T-cell (primary cell): ENCODE measurements at regions of chrX and their contacts with region 1.

Region 1: GRCh38 chrX:152941328-152942106 is 43.6 kb downstream of the ZNF185 start:
- DNase-seq: peak; percentile 79 to 93 (median 86)
- ATAC-seq: peak; percentile 90 to 97 (median 96)
- H3K4me3 ChIP-seq: peak overlapping the region; percentile 38 to 54
- H3K4me3 Mint-ChIP-seq: peak overlapping the region; percentile 78 to 86 (median 79)
- H3K27ac ChIP-seq: peak overlapping the region; percentile 81
- H3K27ac Mint-ChIP-seq: peak overlapping the region; percentile 88 to 91
- H3K4me1 ChIP-seq: peaks cover 0 to 11% of the 10 kb centered on the region in 2 experiments
- H3K4me1 Mint-ChIP-seq: peaks cover 0 to 10% (median 10%) of the 10 kb centered on the region in 3 donors
- H3K27me3 ChIP-seq: no peaks in the 10 kb centered on the region
- H3K27me3 Mint-ChIP-seq: peaks cover 0 to 26% of the 10 kb centered on the region in 2 donors

Region 2: DNA sequence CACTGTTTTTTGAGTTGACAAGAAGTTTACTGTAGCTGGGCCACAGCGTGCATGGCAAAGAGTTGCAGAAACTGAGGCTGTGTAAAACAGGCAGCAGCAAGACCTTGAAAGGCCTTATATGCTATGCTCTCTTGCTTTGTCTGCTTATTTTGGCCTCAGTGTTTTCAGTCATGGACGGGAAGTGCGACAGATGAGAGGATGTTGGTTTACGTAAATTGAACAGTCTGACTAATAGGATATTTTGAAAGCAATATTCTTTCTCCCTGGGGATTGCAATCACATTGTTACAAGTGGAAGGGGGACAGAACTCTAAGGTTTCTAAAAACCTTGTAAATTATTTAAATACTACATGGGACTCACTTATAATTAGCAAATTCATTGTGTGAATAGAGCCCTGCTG is 770.9 kb before region 1 on chrX:
- CTCF ChIA-PET with region 1: no interaction called
- POLR2A ChIA-PET with region 1: no interaction called
- DNase-seq: no peak
- ATAC-seq: no peak
- H3K4me3 ChIP-seq: no peak overlapping the region
- H3K4me3 Mint-ChIP-seq: no peak overlapping the region
- H3K27ac ChIP-seq: no peak overlapping the region
- H3K27ac Mint-ChIP-seq: no peak overlapping the region
- H3K4me1 ChIP-seq: no peaks in the 10 kb centered on the region
- H3K4me1 Mint-ChIP-seq: no peaks in the 10 kb centered on the region
- H3K27me3 ChIP-seq: no peaks in the 10 kb centered on the region
- H3K27me3 Mint-ChIP-seq: peaks cover 0 to 4% of the 10 kb centered on the region in 2 donors

Region 3: GRCh38 chrX:152830312-152831305 is 110.9 kb before region 1 on chrX and contains the starts of genes CETN2 and NSDHL:
- CTCF ChIA-PET with region 1: no interaction called
- POLR2A ChIA-PET with region 1: interaction called in 1 of 2 experiments, 13 read pairs
- DNase-seq: peak; percentile 86 to 95 (median 92)
- ATAC-seq: peak; percentile 97 to 99 (median 98)
- H3K4me3 ChIP-seq: peak within 1 kb of the TSS; percentile 52 to 68
- H3K4me3 Mint-ChIP-seq: peak within 1 kb of the TSS; percentile 85 to 95 (median 91)
- H3K27ac ChIP-seq: peak within 1 kb of the TSS; percentile 55
- H3K27ac Mint-ChIP-seq: peak within 1 kb of the TSS; percentile 84 to 88
- H3K4me1 ChIP-seq: peaks cover 2 to 20% of the 10 kb centered on the region in 2 experiments
- H3K4me1 Mint-ChIP-seq: peaks cover 10 to 35% (median 29%) of the 10 kb centered on the region in 3 donors
- H3K27me3 ChIP-seq: no peaks in the 10 kb centered on the region
- H3K27me3 Mint-ChIP-seq: peaks cover 0 to 3% of the 10 kb centered on the region in 2 donors
- total RNA-seq, gene CETN2: 6.5 to 7.6 (median 6.9) TPM
- total RNA-seq, gene NSDHL: 3.1 to 8.1 (median 7.1) TPM

Region 4: DNA sequence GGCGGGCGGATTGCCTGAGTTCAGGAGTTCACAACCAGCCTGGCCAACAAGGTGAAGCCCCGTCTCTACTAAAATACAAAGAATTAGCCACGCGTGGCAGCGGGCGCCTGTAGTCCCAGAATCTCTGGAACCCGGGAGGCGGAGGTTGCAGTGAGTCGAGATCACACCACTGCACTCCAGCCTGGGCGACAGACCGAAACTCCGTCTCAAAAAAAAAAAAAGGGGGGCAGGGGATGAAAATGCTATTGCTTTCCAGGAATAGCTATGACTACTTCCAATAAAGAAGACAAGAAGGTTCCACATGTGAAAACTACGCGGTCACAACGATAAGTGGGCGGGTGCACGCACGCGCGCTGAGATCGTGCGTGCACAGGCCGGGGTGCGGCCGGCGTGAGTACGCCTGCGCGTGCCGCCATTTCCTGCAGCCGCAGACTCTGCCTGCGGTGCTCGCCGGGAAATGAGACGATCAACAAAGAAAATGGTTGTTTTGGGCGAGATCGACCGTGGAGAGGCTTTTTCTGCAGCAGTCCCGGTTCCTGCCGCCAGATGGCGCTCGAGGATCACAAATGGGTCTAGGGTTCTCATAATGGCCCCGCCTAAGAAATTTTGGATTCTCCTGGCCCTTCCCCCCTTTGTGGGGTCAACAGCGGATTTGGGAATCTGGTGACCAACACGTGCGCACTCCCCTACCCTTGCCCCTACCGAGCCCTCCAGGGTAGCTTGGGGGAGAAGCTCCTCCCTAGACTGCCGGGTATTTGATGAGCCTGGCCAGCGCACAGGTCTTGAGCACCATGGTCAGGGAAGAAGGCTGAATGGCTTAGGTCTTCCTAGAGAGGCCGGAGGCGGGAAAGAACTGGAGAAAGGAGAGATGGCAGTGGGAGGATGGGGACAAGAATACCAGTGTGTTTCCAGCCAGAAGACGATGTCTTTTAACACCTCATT is 17.3 kb after region 1 on chrX:
- CTCF ChIA-PET with region 1: interaction called in 1 of 2 experiments, 10 read pairs
- POLR2A ChIA-PET with region 1: interaction called in 1 of 2 experiments, 3 read pairs
- DNase-seq: peak; percentile 79 to 95 (median 87)
- ATAC-seq: peak; percentile 98 to 99 (median 98)
- H3K4me3 ChIP-seq: peak overlapping the region; percentile 27 to 28
- H3K4me3 Mint-ChIP-seq: peak overlapping the region; percentile 70 to 75 (median 71)
- H3K27ac ChIP-seq: peak overlapping the region; percentile 71
- H3K27ac Mint-ChIP-seq: peak overlapping the region; percentile 88 to 91
- H3K4me1 ChIP-seq: peaks cover 0 to 12% of the 10 kb centered on the region in 2 experiments
- H3K4me1 Mint-ChIP-seq: peaks cover 9 to 15% (median 14%) of the 10 kb centered on the region in 3 donors
- H3K27me3 ChIP-seq: no peaks in the 10 kb centered on the region
- H3K27me3 Mint-ChIP-seq: peaks cover 0 to 19% of the 10 kb centered on the region in 2 donors

Region 5: GRCh38 chrX:153074262-153074899 is 132.9 kb after region 1 on chrX:
- CTCF ChIA-PET with region 1: no interaction called
- POLR2A ChIA-PET with region 1: no interaction called
- DNase-seq: no peak
- ATAC-seq: no peak
- H3K4me3 ChIP-seq: no peak overlapping the region
- H3K4me3 Mint-ChIP-seq: peak overlapping the region in 1 of 3 donors; percentile 16
- H3K27ac ChIP-seq: no peak overlapping the region
- H3K27ac Mint-ChIP-seq: no peak overlapping the region
- H3K4me1 ChIP-seq: no peaks in the 10 kb centered on the region
- H3K4me1 Mint-ChIP-seq: no peaks in the 10 kb centered on the region
- H3K27me3 ChIP-seq: no peaks in the 10 kb centered on the region
- H3K27me3 Mint-ChIP-seq: no peaks in the 10 kb centered on the region